Activated CD4-positive, alpha-beta memory T cell treated with anti-CD3 and anti-CD28 coated beads, Interleukin-2, amount 10 ng/mL, durations not matched to agents 7 days and 5 days (primary cell): ENCODE measurements at regions of chr22 and their contacts with region 1.

Region 1: GRCh38 chr22:43187171-43188099 is 501 bp upstream of the TTLL12 start:
- DNase-seq: peak; percentile 97
- H3K4me3 Mint-ChIP-seq: peak overlapping the region; percentile 80
- H3K27ac Mint-ChIP-seq: peak overlapping the region; percentile 92
- H3K4me1 Mint-ChIP-seq: peaks cover 37% of the 10 kb centered on the region
- H3K27me3 Mint-ChIP-seq: peaks cover 3% of the 10 kb centered on the region

Region 2: GRCh38 chr22:43142880-43143562 is 44.4 kb before region 1 on chr22 and contains the start of gene MCAT:
- CTCF ChIA-PET with region 1: interaction called, 9 read pairs
- POLR2A ChIA-PET with region 1: interaction called, 29 read pairs
- DNase-seq: peak; percentile 82
- H3K4me3 Mint-ChIP-seq: peak within 1 kb of the TSS; percentile 85
- H3K27ac Mint-ChIP-seq: peak within 1 kb of the TSS; percentile 82
- H3K4me1 Mint-ChIP-seq: peaks cover 37% of the 10 kb centered on the region
- H3K27me3 Mint-ChIP-seq: no peaks in the 10 kb centered on the region
- total RNA-seq, gene MCAT: 8.5 to 8.8 TPM

Region 3: DNA sequence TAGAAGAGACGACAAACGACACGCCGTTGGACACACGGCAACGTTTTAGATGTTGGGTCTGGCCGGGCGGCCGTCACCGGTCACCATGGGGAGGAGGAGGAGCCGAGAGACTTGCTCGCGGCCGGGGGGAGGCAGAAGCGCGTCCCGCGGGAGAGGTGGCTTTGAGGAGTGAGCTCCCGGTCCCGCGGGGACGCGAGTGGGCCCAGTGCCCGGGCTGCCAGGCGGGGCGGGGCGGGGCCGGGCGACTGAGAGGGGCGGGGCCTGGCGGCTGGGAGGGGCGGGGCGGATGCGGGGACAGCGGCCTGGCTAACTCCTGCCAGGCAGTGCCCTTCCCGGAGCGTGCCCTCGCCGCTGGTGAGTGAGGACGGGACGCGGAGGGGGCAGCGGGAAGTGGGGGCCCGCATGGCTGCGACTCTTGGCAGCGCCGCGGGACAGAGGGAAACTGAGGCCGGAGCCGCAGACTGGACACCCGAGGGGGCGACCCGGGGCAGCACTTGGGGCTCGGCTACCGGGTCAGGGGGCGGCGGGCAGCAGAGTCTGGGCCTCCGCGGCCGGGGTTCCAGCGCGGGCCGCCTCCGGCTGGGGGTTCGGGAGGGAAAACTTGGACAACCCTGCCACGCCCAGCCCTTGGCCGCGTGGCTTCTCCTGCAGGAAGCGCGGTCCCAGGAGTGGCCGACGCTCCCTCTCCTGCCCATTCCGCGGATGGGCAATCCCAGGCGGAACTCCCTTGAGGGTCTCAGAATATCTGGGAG is 36.0 kb before region 1 on chr22 and contains the start of gene TSPO:
- CTCF ChIA-PET with region 1: interaction called, 5 read pairs
- POLR2A ChIA-PET with region 1: interaction called, 11 read pairs
- DNase-seq: peak; percentile 74
- H3K4me3 Mint-ChIP-seq: peak within 1 kb of the TSS; percentile 90
- H3K27ac Mint-ChIP-seq: peak within 1 kb of the TSS; percentile 90
- H3K4me1 Mint-ChIP-seq: peaks cover 36% of the 10 kb centered on the region
- H3K27me3 Mint-ChIP-seq: no peaks in the 10 kb centered on the region
- total RNA-seq, gene TSPO: 133 TPM

Region 4: GRCh38 chr22:43263645-43264514 is 76.4 kb after region 1 on chr22:
- CTCF ChIA-PET with region 1: interaction called, 5 read pairs
- POLR2A ChIA-PET with region 1: interaction called, 20 read pairs
- DNase-seq: peak; percentile 90
- H3K4me3 Mint-ChIP-seq: peak overlapping the region; percentile 63
- H3K27ac Mint-ChIP-seq: peak overlapping the region; percentile 85
- H3K4me1 Mint-ChIP-seq: peaks cover 32% of the 10 kb centered on the region
- H3K27me3 Mint-ChIP-seq: peaks cover 9% of the 10 kb centered on the region